CD4-positive, alpha-beta T cell (primary cell): ENCODE measurements at regions of chr5 and their contacts with region 1.

Region 1: GRCh38 chr5:139341650-139342422 is at the start of gene PAIP2:
- DNase-seq: peak; percentile 95 to 99 (median 97)
- ATAC-seq: peak; percentile 82
- H3K4me3 ChIP-seq: peak within 1 kb of the TSS; percentile 94
- H3K4me3 Mint-ChIP-seq: peak within 1 kb of the TSS; percentile 96
- H3K27ac ChIP-seq: peak within 1 kb of the TSS; percentile 100
- H3K27ac Mint-ChIP-seq: peak within 1 kb of the TSS; percentile 95
- H3K4me1 ChIP-seq: peaks cover 34% of the 10 kb centered on the region
- H3K4me1 Mint-ChIP-seq: peaks cover 65% of the 10 kb centered on the region
- H3K27me3 ChIP-seq: no peaks in the 10 kb centered on the region
- H3K27me3 Mint-ChIP-seq: no peaks in the 10 kb centered on the region
- CTCF ChIP-seq: peak; percentile 70
- total RNA-seq, gene PAIP2: 151 to 156 TPM

Region 2: DNA sequence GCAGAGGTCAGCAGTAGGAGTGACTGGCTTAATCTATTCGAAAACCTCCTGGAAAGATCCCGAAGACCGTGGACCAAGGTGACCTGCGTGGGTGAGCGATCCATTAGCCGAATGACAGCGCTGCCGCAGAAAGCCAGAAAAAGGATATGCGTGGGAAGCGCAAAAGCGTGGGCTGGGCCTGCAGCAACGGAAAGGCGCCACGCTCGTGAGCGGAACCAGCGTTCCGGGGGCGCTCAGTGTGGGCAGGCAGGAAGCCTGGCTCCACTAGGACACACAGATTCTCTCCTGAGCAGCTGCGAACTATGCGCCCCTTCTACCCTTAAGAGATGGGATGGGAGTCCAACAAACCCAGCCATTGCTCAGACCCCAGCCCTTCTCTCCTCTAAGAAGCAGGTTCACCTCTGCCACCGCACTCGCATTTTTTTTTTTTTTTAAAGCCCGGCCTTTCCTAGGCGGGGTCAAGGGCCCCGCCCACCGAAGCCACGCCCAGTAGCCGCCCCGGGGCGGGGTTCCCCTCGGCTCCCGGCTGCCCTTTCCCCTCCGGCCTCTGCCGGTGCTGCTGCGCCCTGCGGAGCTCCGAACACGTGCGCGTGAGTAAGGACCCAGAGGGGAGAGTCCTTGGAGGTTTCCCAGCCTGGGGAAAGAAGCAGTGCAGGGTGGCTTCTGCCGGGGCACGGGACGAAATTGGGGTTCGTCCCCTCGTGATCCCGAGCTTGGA is 68.1 kb before region 1 on chr5:
- CTCF ChIA-PET with region 1: interaction called, 4 read pairs
- POLR2A ChIA-PET with region 1: interaction called, 29 read pairs
- intact Hi-C with region 1: loop called in 1 of 2 experiments (anchors 5 kb)
- DNase-seq: peak; percentile 69 to 93 (median 78)
- ATAC-seq: peak; percentile 86
- H3K4me3 ChIP-seq: peak overlapping the region; percentile 77
- H3K4me3 Mint-ChIP-seq: peak overlapping the region; percentile 78
- H3K27ac ChIP-seq: peak overlapping the region; percentile 38 to 47
- H3K27ac Mint-ChIP-seq: peak overlapping the region; percentile 67
- H3K4me1 ChIP-seq: peaks cover 46% of the 10 kb centered on the region
- H3K4me1 Mint-ChIP-seq: peaks cover 50% of the 10 kb centered on the region
- H3K27me3 ChIP-seq: no peaks in the 10 kb centered on the region
- H3K27me3 Mint-ChIP-seq: no peaks in the 10 kb centered on the region
- CTCF ChIP-seq: no peak

Region 3: DNA sequence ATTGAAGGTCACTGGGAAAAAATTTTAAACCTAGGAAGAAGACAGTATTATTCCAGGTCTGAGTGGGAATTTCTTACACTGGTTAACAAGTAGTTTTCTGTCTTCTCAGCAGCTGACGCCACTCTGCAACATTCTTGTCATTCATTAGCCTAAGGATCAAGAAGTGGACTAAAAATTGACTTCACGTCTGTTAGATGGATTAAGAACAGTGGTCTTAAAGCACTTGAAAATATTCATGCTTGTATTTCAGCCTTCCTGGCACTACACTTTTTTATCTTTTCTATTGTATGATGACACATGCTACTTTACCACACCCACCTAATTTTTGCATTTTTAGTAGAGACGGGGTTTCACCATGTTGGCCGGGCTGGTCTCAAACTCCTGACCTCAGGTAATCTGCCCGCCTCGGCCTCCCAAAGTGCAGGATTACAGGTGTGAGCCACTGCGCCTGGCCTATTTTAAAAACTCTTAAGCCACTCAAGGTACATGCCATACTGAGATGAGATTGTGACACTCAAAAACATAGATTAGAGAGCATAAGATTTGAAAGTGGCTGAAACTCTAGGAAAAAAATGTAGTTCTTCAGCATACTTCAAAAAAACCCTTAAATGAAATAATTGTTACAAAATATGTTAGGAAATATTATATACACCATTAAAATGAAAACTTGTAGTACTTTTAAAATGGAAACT is 39.9 kb before region 1 on chr5:
- CTCF ChIA-PET with region 1: interaction called, 8 read pairs
- POLR2A ChIA-PET with region 1: interaction called, 149 read pairs
- intact Hi-C with region 1: no loop called
- DNase-seq: no peak
- ATAC-seq: no peak
- H3K4me3 ChIP-seq: no peak overlapping the region
- H3K4me3 Mint-ChIP-seq: peak overlapping the region; percentile 56
- H3K27ac ChIP-seq: no peak overlapping the region
- H3K27ac Mint-ChIP-seq: peak overlapping the region; percentile 71
- H3K4me1 ChIP-seq: peaks cover 52% of the 10 kb centered on the region
- H3K4me1 Mint-ChIP-seq: peaks cover 97% of the 10 kb centered on the region
- H3K27me3 ChIP-seq: no peaks in the 10 kb centered on the region
- H3K27me3 Mint-ChIP-seq: no peaks in the 10 kb centered on the region
- CTCF ChIP-seq: no peak

Region 4: DNA sequence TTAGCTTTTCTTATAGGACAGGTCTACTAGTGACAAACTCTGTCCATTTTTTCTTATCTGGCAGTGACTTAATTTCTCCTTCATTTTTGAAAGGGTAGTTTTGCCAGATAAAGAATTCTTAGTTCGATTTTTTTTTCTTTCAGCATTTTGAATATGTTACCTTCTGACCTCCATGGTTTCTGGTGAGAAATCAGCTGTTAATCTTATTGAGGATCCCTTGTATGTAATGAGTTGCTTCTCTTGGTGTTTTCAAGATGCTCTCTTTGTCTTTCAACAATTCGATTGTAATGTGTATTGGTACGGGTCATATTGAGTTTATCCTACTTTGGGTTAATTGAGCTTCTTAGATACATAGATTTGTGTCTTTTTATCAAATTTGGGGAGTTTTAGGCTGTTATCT is 12.3 kb after region 1 on chr5:
- CTCF ChIA-PET with region 1: interaction called, 4 read pairs
- POLR2A ChIA-PET with region 1: interaction called, 26 read pairs
- intact Hi-C with region 1: no loop called
- DNase-seq: no peak
- ATAC-seq: no peak
- H3K4me3 ChIP-seq: no peak overlapping the region
- H3K4me3 Mint-ChIP-seq: no peak overlapping the region
- H3K27ac ChIP-seq: no peak overlapping the region
- H3K27ac Mint-ChIP-seq: no peak overlapping the region
- H3K4me1 ChIP-seq: peaks cover 15% of the 10 kb centered on the region
- H3K4me1 Mint-ChIP-seq: peaks cover 56% of the 10 kb centered on the region
- H3K27me3 ChIP-seq: no peaks in the 10 kb centered on the region
- H3K27me3 Mint-ChIP-seq: no peaks in the 10 kb centered on the region
- CTCF ChIP-seq: no peak

Region 5: GRCh38 chr5:139392678-139393496 is 51.1 kb after region 1 on chr5:
- CTCF ChIA-PET with region 1: interaction called, 6 read pairs
- POLR2A ChIA-PET with region 1: interaction called, 21 read pairs
- intact Hi-C with region 1: loop called (anchors 5 kb)
- DNase-seq: peak; percentile 51 to 89 (median 64)
- ATAC-seq: peak; percentile 66
- H3K4me3 ChIP-seq: peak overlapping the region; percentile 81
- H3K4me3 Mint-ChIP-seq: peak overlapping the region; percentile 92
- H3K27ac ChIP-seq: no peak overlapping the region
- H3K27ac Mint-ChIP-seq: peak overlapping the region; percentile 59
- H3K4me1 ChIP-seq: peaks cover 61% of the 10 kb centered on the region
- H3K4me1 Mint-ChIP-seq: peaks cover 38% of the 10 kb centered on the region
- H3K27me3 ChIP-seq: peaks cover 0 to 6% of the 10 kb centered on the region in 2 experiments
- H3K27me3 Mint-ChIP-seq: no peaks in the 10 kb centered on the region
- CTCF ChIP-seq: peak; percentile 66

Region 6: GRCh38 chr5:139919308-139919707 is 577.5 kb after region 1 on chr5:
- CTCF ChIA-PET with region 1: no interaction called
- POLR2A ChIA-PET with region 1: no interaction called
- intact Hi-C with region 1: no loop called
- DNase-seq: no peak
- ATAC-seq: no peak
- H3K4me3 ChIP-seq: no peak overlapping the region
- H3K4me3 Mint-ChIP-seq: no peak overlapping the region
- H3K27ac ChIP-seq: no peak overlapping the region
- H3K27ac Mint-ChIP-seq: no peak overlapping the region
- H3K4me1 ChIP-seq: no peaks in the 10 kb centered on the region
- H3K4me1 Mint-ChIP-seq: no peaks in the 10 kb centered on the region
- H3K27me3 ChIP-seq: peaks cover 19 to 21% of the 10 kb centered on the region in 2 experiments
- H3K27me3 Mint-ChIP-seq: peaks cover 26% of the 10 kb centered on the region
- CTCF ChIP-seq: no peak